ENCODE measurements at regions of chr2 and their contacts with region 1.

Region 1: GRCh38 chr2:241637000-241637791 is at the starts of genes ATG4B and THAP4:
- DNase-seq: peak; percentile 93
- ATAC-seq: peak; percentile 71
- H3K4me3 ChIP-seq: peak within 1 kb of the TSS; percentile 76 to 97 (median 95)
- H3K4me3 Mint-ChIP-seq: peak within 1 kb of the TSS; percentile 84
- H3K27ac ChIP-seq: peak within 1 kb of the TSS; percentile 90 to 95
- H3K27ac Mint-ChIP-seq: peak within 1 kb of the TSS; percentile 96
- H3K4me1 ChIP-seq: peaks cover 19 to 24% of the 10 kb centered on the region in 2 donors
- H3K4me1 Mint-ChIP-seq: peaks cover 45% of the 10 kb centered on the region
- H3K27me3 ChIP-seq: no peaks in the 10 kb centered on the region
- H3K27me3 Mint-ChIP-seq: no peaks in the 10 kb centered on the region
- CTCF ChIP-seq: no peak
- total RNA-seq, gene ATG4B: 130 and 145 TPM in 2 replicates
- total RNA-seq, gene THAP4: 26.5 and 29.9 TPM in 2 replicates

Region 2: DNA sequence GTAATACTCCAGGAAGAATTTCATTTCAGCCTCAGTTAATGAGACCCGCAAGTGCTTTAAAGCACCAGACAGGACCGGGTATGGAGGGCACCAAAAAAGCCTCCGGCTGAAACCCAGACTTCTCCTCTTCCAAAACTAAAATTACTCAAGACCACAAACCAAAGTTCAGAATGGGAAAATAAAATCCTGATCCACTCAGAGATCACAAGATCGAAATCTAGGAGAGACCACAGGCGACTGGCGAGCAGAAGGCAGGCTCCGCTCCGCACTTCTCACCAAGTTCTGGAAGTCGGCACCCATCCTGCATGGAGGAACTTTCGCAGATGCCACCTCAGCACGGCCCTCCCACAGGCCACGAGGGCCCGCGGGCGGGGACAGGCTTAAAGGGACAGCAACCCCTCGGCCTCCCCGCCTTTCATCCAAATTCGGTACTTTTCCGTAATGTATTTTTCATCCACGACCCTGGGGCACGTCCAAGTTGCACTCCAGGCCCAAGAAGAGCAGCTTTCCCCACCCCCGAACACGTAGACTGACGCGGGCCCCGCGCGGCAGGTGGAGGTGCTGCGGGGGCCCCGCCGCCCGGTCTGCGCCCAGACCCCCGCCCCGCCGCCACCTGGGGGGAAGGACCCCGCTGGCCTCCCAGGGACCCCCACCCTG is 365.4 kb before region 1 on chr2:
- CTCF ChIA-PET with region 1: no interaction called
- POLR2A ChIA-PET with region 1: no interaction called
- intact Hi-C with region 1: loop called (anchors 5 kb)
- DNase-seq: peak; percentile 68
- ATAC-seq: peak; percentile 70
- H3K4me3 ChIP-seq: peak overlapping the region; percentile 62 to 81 (median 67)
- H3K4me3 Mint-ChIP-seq: peak overlapping the region; percentile 98
- H3K27ac ChIP-seq: peak overlapping the region; percentile 21 to 40
- H3K27ac Mint-ChIP-seq: peak overlapping the region; percentile 92
- H3K4me1 ChIP-seq: peaks cover 12 to 21% of the 10 kb centered on the region in 2 donors
- H3K4me1 Mint-ChIP-seq: peaks cover 31% of the 10 kb centered on the region
- H3K27me3 ChIP-seq: no peaks in the 10 kb centered on the region
- H3K27me3 Mint-ChIP-seq: no peaks in the 10 kb centered on the region
- CTCF ChIP-seq: no peak

Region 3: GRCh38 chr2:241609859-241610793 is 27.1 kb before region 1 on chr2:
- CTCF ChIA-PET with region 1: interaction called, 5 read pairs
- POLR2A ChIA-PET with region 1: no interaction called
- intact Hi-C with region 1: loop called (anchors 1 kb)
- DNase-seq: peak; percentile 93
- ATAC-seq: peak; percentile 99
- H3K4me3 ChIP-seq: peak overlapping the region in 4 of 5 experiments; percentile 50 to 71 (median 62)
- H3K4me3 Mint-ChIP-seq: peak overlapping the region; percentile 66
- H3K27ac ChIP-seq: peak overlapping the region; percentile 50 to 74
- H3K27ac Mint-ChIP-seq: peak overlapping the region; percentile 63
- H3K4me1 ChIP-seq: peaks cover 8 to 16% of the 10 kb centered on the region in 2 donors
- H3K4me1 Mint-ChIP-seq: peaks cover 20% of the 10 kb centered on the region
- H3K27me3 ChIP-seq: no peaks in the 10 kb centered on the region
- H3K27me3 Mint-ChIP-seq: no peaks in the 10 kb centered on the region
- CTCF ChIP-seq: peak; percentile 76

Region 4: DNA sequence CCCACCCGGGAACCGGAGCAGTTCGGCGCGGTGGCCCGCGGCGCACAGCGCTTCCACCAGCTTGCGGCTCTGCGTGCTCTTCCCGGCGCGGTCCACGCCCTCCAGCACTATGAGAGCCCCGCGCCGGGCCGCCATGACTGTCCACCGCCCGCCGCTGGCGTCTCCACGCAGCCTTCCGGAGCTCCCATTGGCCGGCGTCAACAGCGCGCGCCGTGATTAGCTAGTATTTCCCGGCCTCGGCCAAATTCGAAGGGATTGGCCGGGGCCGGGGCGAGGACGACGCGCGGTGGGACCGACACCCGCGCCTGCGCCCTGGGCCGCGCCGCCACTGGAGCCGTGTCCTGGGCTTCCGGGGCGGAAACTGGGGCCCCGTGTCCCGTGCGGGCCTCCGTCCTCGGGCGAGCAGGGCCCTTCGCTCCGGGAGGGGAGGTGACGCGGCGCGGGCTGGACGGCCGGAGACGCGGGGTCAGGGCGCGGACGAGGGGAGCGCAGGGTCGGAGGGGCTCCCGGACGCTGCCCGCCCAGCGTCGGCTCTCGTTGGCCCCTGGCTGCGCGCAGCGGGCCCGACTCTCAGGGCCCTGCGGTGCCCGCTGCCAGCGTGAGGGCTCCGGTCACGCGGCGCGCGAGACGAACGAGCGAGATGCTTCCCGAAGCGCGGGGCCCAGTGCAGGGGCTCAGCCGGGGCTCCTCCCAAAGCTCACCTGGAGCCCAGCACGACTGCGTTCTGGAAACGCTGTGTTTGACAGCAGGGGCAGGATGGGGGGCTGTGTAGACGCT is 49.6 kb after region 1 on chr2 and contains the start of gene DTYMK:
- CTCF ChIA-PET with region 1: no interaction called
- POLR2A ChIA-PET with region 1: interaction called, 6 read pairs
- intact Hi-C with region 1: loop called (anchors 1 kb)
- DNase-seq: peak; percentile 97
- ATAC-seq: peak; percentile 95
- H3K4me3 ChIP-seq: peak within 1 kb of the TSS; percentile 71 to 91 (median 82)
- H3K4me3 Mint-ChIP-seq: peak within 1 kb of the TSS; percentile 84
- H3K27ac ChIP-seq: peak within 1 kb of the TSS; percentile 61 to 91
- H3K27ac Mint-ChIP-seq: peak within 1 kb of the TSS; percentile 68
- H3K4me1 ChIP-seq: peaks cover 8 to 19% of the 10 kb centered on the region in 2 donors
- H3K4me1 Mint-ChIP-seq: peaks cover 26% of the 10 kb centered on the region
- H3K27me3 ChIP-seq: no peaks in the 10 kb centered on the region
- H3K27me3 Mint-ChIP-seq: no peaks in the 10 kb centered on the region
- CTCF ChIP-seq: no peak
- total RNA-seq, gene DTYMK: 20.7 and 26.3 TPM in 2 replicates

Region 5: GRCh38 chr2:241877989-241878970 is 241.1 kb after region 1 on chr2:
- CTCF ChIA-PET with region 1: interaction called, 3 read pairs
- POLR2A ChIA-PET with region 1: no interaction called
- intact Hi-C with region 1: loop called (anchors 1 kb)
- DNase-seq: peak; percentile 79
- ATAC-seq: no peak
- H3K4me3 ChIP-seq: no peak overlapping the region
- H3K4me3 Mint-ChIP-seq: no peak overlapping the region
- H3K27ac ChIP-seq: no peak overlapping the region
- H3K27ac Mint-ChIP-seq: peak overlapping the region; percentile 53
- H3K4me1 ChIP-seq: peaks cover 19 to 30% of the 10 kb centered on the region in 2 donors
- H3K4me1 Mint-ChIP-seq: peaks cover 32% of the 10 kb centered on the region
- H3K27me3 ChIP-seq: no peaks in the 10 kb centered on the region
- H3K27me3 Mint-ChIP-seq: no peaks in the 10 kb centered on the region
- CTCF ChIP-seq: peak; percentile 64